Panc1 (cell line): ENCODE measurements at regions of chr3 and their contacts with region 1.

Region 1: DNA sequence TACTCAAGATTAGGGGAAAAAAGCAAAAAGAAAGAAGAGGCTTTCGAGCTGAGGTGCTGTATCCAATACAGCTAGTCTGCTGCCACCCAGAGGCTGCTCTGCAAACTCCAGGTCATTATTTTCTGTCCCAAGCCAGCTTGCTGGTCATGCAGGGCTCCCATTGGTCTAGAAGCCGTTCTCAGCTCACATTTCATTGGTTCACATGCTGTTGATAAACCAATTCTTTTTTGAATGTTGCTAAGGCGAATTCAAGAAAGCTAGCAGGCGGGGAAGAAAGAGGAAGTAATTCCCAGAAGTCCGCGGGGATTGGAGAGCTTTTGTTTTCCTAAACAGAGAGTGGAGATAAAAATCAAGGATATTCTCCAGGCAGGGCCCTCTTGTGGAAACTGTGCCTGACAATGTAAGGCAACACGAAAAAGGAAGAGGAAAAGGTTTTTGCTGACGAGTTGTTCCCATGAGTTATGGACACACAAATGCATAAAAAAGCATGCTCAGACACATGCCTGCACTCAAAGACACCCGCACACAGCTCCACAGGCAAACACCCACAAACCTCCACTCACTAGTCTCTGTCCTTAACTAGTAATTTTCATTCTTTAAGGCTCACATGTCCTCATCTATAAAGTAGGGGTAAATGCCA is 33.4 kb downstream of the FSTL1 start:
- DNase-seq: peak; percentile 84
- ATAC-seq: peak; percentile 97
- H3K4me3 ChIP-seq: peak overlapping the region; percentile 34 to 46
- H3K27ac ChIP-seq: peak overlapping the region; percentile 54; the same call in 1 of the 2 replicates
- H3K4me1 ChIP-seq: peaks cover 4% of the 10 kb centered on the region; the same call in 1 of the 2 replicates
- H3K27me3 ChIP-seq: peaks cover 9% of the 10 kb centered on the region; the same call in 1 of the 2 replicates
- CTCF ChIP-seq: peak; percentile 95

Region 2: DNA sequence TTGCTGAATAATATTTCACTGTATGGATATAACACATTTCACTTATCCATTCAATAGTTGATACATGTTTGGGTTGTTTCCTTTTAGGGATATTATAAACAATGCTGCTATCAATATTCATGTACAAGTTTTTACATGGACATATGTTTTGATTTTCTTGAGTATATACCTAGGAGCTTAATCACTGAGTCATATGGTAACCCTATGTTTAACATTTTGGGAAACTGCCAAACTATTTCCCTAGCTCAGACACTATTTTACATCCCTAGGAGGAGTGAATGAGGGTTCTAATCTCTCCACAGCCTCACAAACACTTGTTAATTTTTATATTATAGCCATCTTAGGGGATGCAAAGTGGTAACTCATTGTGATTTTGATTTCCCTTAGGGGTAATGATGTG is 198.4 kb before region 1 on chr3:
- CTCF ChIA-PET with region 1: no interaction called
- POLR2A ChIA-PET with region 1: interaction called, 11 read pairs
- in situ Hi-C with region 1: no loop called
- intact Hi-C with region 1: no loop called
- DNase-seq: no peak
- ATAC-seq: no peak
- H3K4me3 ChIP-seq: no peak overlapping the region
- H3K27ac ChIP-seq: no peak overlapping the region
- H3K4me1 ChIP-seq: no peaks in the 10 kb centered on the region
- H3K27me3 ChIP-seq: no peaks in the 10 kb centered on the region
- CTCF ChIP-seq: no peak

Region 3: DNA sequence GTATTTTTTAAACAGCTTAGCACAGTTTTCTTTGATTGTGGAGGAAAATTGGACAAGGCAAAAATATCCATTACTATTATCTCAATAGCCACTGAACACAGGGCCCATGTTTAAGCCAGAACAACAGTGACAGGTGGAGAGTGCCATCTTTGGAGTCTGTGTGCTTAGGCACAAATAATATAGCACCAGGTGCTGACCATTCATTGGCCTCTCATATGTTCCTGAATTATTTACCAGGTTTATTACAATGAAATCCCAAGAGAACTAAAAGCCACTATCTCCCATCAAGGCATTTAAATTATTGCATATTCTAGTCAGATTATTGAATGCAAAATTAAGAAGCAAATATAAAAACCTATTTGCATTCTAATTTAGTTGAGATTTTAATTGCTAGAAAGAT is 172.0 kb before region 1 on chr3:
- CTCF ChIA-PET with region 1: interaction called, 25 read pairs
- POLR2A ChIA-PET with region 1: interaction called, 3 read pairs
- in situ Hi-C with region 1: no loop called
- intact Hi-C with region 1: loop called (anchors 1 kb)
- DNase-seq: no peak
- ATAC-seq: no peak
- H3K4me3 ChIP-seq: no peak overlapping the region
- H3K27ac ChIP-seq: no peak overlapping the region
- H3K4me1 ChIP-seq: no peaks in the 10 kb centered on the region
- H3K27me3 ChIP-seq: peaks cover 2% of the 10 kb centered on the region
- CTCF ChIP-seq: no peak

Region 4: GRCh38 chr3:120558771-120559241 is 141.4 kb after region 1 on chr3:
- CTCF ChIA-PET with region 1: interaction called, 17 read pairs
- POLR2A ChIA-PET with region 1: interaction called, 6 read pairs
- in situ Hi-C with region 1: no loop called
- intact Hi-C with region 1: loop called (anchors 1 kb)
- DNase-seq: no peak
- ATAC-seq: peak; percentile 83
- H3K4me3 ChIP-seq: peak overlapping the region; percentile 51 to 76
- H3K27ac ChIP-seq: peak overlapping the region; percentile 17; the same call in 1 of the 2 replicates
- H3K4me1 ChIP-seq: peaks cover 14% of the 10 kb centered on the region
- H3K27me3 ChIP-seq: peaks cover 2% of the 10 kb centered on the region; the same call in 1 of the 2 replicates
- CTCF ChIP-seq: peak; percentile 99

Region 5: DNA sequence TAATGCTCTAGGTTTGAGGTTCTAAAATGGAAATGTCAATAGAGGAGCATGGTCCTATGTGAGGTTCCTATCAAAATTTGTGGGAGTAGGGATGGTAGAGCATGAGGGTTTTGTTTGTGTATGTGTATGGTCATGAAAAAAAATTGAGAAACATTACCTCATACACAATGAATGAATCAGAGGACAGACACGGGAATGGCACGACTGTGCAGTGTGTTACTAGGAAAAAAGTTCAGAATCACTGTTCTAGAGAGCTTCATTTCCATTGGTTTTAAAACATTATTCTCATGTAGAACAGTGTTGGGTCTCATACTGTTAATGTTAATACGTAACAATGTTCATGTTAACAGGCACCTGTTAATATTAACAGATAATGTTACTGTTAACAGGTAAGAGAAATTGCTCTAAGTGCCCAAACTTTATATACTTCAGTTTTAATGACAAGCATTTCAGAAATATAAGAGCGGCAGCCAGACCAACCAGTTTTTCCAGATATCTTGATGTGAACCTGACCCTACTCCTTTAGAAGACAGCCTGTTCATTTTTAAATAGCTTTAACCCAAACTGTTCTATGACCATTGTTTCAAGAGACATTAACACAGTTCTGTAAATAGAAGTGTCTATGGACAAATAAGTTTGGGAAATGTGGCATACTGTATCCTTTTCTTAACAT is 1524.9 kb after region 1 on chr3:
- CTCF ChIA-PET with region 1: no interaction called
- POLR2A ChIA-PET with region 1: no interaction called
- in situ Hi-C with region 1: no loop called
- intact Hi-C with region 1: no loop called
- DNase-seq: no peak
- ATAC-seq: no peak
- H3K4me3 ChIP-seq: no peak overlapping the region
- H3K27ac ChIP-seq: no peak overlapping the region
- H3K4me1 ChIP-seq: no peaks in the 10 kb centered on the region
- H3K27me3 ChIP-seq: no peaks in the 10 kb centered on the region
- CTCF ChIP-seq: no peak